ENCODE measurements at regions of chr1 and their contacts with region 1.

Region 1: GRCh38 chr1:222455188-222455879 is 92.6 kb downstream of the HHIPL2 start:
- DNase-seq: peak; percentile 80 to 94 (median 88)
- H3K4me3 ChIP-seq: peak overlapping the region in 39 of 59 donors; percentile 2 to 54 (median 26)
- H3K27ac ChIP-seq: peak overlapping the region in 8 of 59 donors; percentile 6 to 45 (median 25)
- H3K27me3 ChIP-seq: peaks cover 0 to 4% (median 0%) of the 10 kb centered on the region in 45 donors
- CTCF ChIP-seq: peak; percentile 74 to 99 (median 95)

Region 2: DNA sequence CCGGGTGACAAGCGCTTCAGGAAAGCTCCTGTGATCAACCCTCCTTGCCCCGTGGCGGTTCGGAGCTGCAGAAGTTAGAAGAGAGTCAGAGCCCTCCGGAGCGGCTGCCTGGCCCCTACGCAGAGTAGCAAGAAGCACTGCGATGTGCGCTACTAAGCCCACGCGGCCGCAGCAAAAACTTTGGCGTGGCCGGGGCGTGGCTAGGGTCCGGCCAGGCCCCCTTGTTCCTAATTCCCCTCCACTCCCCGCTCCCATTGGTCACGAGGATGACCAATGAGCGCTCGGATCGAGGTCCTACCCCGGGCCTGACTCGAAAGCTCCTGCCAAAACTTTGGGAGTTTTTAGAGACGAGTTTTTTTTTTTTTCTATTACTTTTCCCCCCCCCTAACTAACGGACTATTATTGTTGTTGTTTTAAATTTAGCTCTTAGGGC is 1576.2 kb before region 1 on chr1 and contains the start of gene HLX:
- intact Hi-C with region 1: loop called in 1 of 2 experiments (anchors 10 kb)
- DNase-seq: peak in 6 of 10 donors; percentile 41 to 68 (median 53)
- H3K4me3 ChIP-seq: peak within 1 kb of the TSS; percentile 45 to 87 (median 75)
- H3K27ac ChIP-seq: peak within 1 kb of the TSS in 53 of 59 donors; percentile 29 to 92 (median 80)
- H3K27me3 ChIP-seq: peaks cover 0 to 63% (median 27%) of the 10 kb centered on the region in 45 donors
- CTCF ChIP-seq: peak in 1 of 56 donors; percentile 8
- total RNA-seq, gene HLX: 0.25 to 5.3 (median 1.6) TPM

Region 3: GRCh38 chr1:221263831-221264767 is 1191.2 kb before region 1 on chr1:
- intact Hi-C with region 1: loop called in 1 of 2 experiments (anchors 10 kb)
- DNase-seq: peak in 8 of 10 donors; percentile 6 to 79 (median 54)
- H3K4me3 ChIP-seq: no peak overlapping the region
- H3K27ac ChIP-seq: peak overlapping the region in 1 of 59 donors; percentile 28
- H3K27me3 ChIP-seq: no peaks in the 10 kb centered on the region
- CTCF ChIP-seq: peak; percentile 31 to 86 (median 73)

Region 4: GRCh38 chr1:221478050-221478949 is 977.0 kb before region 1 on chr1:
- intact Hi-C with region 1: loop called (anchors 2 to 10 kb)
- DNase-seq: peak; percentile 21 to 77 (median 64)
- H3K4me3 ChIP-seq: peak overlapping the region in 6 of 59 donors; percentile 4 to 34 (median 20)
- H3K27ac ChIP-seq: peak overlapping the region in 3 of 59 donors; percentile 14 to 30 (median 29)
- H3K27me3 ChIP-seq: peaks cover 0 to 8% (median 0%) of the 10 kb centered on the region in 45 donors
- CTCF ChIP-seq: peak; percentile 19 to 84 (median 66)

Region 5: GRCh38 chr1:221543529-221544120 is 911.7 kb before region 1 on chr1:
- intact Hi-C with region 1: loop called (anchors 10 kb)
- DNase-seq: no peak
- H3K4me3 ChIP-seq: no peak overlapping the region
- H3K27ac ChIP-seq: no peak overlapping the region
- H3K27me3 ChIP-seq: peaks cover 0 to 6% (median 0%) of the 10 kb centered on the region in 45 donors
- CTCF ChIP-seq: peak; percentile 25 to 80 (median 61)

Region 6: DNA sequence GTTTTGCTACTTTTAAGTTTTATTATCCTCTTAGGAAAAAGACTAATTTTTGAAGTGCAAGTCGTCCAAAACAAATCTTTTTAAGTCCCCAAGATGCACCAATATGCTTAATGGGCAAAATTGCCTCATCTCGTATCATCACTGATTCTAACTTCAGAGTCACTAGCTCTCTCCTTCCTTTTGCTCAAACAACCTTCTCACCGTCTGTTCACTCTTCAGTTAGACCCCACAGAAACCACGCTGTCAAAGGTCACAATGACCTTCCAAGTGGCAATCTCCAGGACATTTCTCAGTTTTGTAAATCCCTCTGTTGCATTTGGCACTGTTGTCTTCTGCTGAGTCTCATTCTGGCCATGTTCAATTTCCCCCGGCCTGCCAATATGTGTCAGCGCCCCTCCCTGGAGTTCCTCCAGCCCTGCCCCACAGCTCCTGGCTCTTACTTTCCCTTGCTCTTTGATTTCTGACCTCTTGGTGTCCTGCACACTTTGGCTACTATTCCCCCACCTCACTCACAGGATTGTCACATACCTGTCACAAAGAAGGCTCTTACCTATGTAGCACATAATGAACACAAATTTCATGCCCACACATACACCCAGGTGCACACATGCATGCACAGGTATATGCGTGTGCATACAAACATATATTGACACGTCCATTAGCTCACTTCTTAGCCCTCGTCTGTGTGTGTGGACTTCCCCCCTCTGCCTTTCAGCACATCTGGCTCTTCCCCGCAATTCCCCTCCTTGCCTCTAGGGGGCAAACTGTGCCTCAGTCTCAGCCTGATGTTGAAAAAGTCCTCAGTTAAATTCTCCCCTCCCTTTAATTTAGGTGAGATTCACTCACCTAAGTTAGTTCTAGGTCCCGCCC is 359.5 kb before region 1 on chr1:
- intact Hi-C with region 1: loop called in 1 of 2 experiments (anchors 10 kb)
- DNase-seq: no peak
- H3K4me3 ChIP-seq: no peak overlapping the region
- H3K27ac ChIP-seq: no peak overlapping the region
- H3K27me3 ChIP-seq: peaks cover 0 to 2% (median 0%) of the 10 kb centered on the region in 45 donors
- CTCF ChIP-seq: peak; percentile 27 to 74 (median 66)

Region 7: DNA sequence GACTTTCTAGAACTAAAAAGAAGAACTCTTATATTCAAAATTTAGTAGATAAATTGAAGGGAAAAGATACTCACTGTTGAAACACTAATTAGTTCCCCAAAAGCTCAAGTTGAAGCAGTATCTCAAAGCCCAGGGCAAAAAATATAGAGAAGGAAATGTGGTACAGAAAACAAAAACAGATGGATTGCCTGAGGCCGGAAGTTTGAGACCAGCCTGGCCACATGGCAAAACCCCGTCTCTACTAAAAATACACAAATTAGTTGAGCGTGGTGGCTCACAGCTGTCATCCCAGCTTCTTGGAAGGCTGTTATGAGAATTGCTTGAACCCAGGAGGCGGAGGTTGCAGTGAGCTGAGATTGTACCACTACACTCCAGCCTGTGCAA is 317.7 kb after region 1 on chr1:
- intact Hi-C with region 1: no loop called
- DNase-seq: peak in 1 of 10 donors; percentile 56
- H3K4me3 ChIP-seq: peak overlapping the region in 29 of 59 donors; percentile 0 to 49 (median 33)
- H3K27ac ChIP-seq: peak overlapping the region in 41 of 59 donors; percentile 7 to 85 (median 60)
- H3K27me3 ChIP-seq: peaks cover 0 to 38% (median 0%) of the 10 kb centered on the region in 45 donors
- CTCF ChIP-seq: no peak